Motor neuron (in vitro differentiated cells): ENCODE measurements at regions of chr7 and their contacts with region 1.

Region 1: DNA sequence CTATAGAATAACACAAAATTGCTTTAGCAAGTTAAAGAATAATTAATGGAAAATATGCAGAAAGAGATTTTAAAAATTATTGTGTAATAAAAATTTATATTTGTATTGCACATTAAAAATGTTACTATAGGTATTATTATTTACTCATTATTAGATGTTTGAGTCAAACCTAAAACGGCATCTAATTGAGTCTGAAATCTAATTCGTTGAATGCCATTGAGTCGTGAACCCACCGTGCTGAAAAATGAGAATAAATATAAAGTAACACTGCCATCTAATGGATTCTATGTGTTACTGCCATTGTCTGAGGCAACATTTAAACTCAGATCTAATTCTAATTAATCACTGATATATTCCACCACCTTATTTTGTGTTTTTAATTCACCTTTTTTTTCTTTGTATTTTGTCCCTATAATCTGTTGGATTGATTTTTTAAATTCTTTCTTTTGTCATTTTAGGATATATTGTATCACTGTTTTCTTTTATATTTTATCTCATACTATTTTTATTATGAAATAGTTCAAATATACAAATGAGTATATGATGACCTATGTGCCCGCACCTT is 62.2 kb downstream of the SAMD9 start:
- ATAC-seq: peak in 5 of 8 experiments; percentile 24 to 62 (median 39)
- H3K4me3 ChIP-seq: no peak overlapping the region
- H3K27ac ChIP-seq: no peak overlapping the region
- H3K4me1 ChIP-seq: no peaks in the 10 kb centered on the region

Region 2: GRCh38 chr7:92621026-92621540 is 434.5 kb before region 1 on chr7:
- in situ Hi-C with region 1: loop called (anchors 10 to 25 kb)
- ATAC-seq: peak; percentile 44 to 92 (median 75)
- H3K4me3 ChIP-seq: no peak overlapping the region
- H3K27ac ChIP-seq: no peak overlapping the region
- H3K4me1 ChIP-seq: peaks cover 2 to 3% of the 10 kb centered on the region in 2 donors

Region 3: DNA sequence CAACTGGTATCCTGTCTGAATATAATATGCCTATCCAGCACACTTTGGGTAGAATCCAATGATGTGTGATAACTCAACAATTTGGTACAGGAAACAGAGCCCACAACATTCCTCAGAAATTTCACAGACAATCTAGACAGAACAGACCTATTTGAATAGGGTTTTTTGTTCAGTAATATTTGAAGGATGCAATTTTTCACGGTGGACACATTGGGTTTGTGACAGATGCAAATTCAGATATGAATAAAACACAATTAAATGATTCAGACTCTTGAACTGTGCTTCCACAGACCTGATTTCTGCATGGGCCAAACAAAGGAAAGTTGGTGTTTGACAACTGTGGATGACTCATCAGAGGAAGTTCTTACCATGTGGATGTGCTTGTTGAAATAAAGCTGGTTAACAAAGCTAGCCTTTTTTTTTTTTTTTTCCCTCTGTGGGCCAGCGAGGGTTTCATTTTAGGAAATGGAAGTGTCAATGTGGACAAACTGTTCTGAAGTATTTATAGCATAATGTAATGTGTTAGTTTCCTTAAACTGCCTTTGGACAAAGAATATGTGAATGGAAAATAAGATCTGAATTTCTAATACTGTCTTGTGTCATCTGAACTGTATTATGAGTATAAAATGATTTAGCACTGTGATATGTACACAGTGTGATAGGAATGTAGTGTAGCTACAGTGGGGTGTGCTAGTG is 422.3 kb before region 1 on chr7:
- in situ Hi-C with region 1: loop called in 3 of 9 experiments (anchors 10 to 25 kb)
- ATAC-seq: peak; percentile 88 to 95 (median 90)
- H3K4me3 ChIP-seq: no peak overlapping the region
- H3K27ac ChIP-seq: peak overlapping the region in 1 of 2 donors; percentile 11
- H3K4me1 ChIP-seq: peaks cover 24 to 31% of the 10 kb centered on the region in 2 donors

Region 4: DNA sequence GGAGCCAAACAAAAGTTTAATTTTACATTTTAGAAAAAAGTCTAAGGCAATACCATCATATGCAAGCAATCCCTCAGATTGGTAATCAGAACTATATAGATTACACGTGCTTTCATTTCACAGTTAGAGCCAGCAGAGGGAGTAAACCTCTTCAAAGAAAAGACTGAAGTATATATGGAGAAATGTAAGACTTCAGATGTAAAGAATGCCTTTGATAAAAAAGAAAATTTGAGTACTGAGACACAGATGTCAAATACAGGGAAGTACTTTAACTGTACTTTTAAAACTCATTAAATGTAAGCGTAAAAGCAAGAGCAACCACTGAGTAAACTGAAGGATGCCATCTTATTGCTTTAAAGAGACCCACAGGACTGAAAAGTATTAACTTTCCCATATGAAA is 364.0 kb before region 1 on chr7:
- in situ Hi-C with region 1: loop called in 1 of 9 experiments (anchors 25 kb)
- ATAC-seq: peak in 5 of 8 experiments; percentile 23 to 44 (median 32)
- H3K4me3 ChIP-seq: no peak overlapping the region
- H3K27ac ChIP-seq: no peak overlapping the region
- H3K4me1 ChIP-seq: peaks cover under 1 to 9% of the 10 kb centered on the region in 2 donors

Region 5: GRCh38 chr7:92854501-92855238 is 201.0 kb before region 1 on chr7:
- in situ Hi-C with region 1: loop called in 1 of 9 experiments (anchors 25 kb)
- ATAC-seq: no peak
- H3K4me3 ChIP-seq: no peak overlapping the region
- H3K27ac ChIP-seq: no peak overlapping the region
- H3K4me1 ChIP-seq: peaks cover 0 to 2% of the 10 kb centered on the region in 2 donors

Region 6: DNA sequence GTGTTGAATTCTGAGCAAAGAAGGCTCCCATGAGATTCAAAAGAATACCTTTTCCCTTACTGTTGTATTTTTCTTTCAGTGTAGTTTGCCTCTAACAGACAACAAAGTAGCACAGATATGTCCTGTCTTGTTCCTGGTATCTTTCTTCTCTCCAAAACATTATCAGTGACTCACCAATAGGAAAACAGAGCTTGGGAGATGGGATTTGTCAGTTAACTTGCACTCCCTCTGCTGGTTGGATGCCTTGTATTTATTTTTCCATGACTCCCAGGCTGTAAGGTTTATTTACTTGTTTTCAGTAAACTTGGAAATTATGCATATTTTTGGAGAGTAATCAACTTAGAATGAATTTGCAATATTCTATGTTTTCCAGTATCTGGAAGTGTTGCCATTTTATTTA is 67.6 kb before region 1 on chr7:
- in situ Hi-C with region 1: no loop called
- ATAC-seq: peak in 3 of 8 experiments; percentile 41 to 73 (median 70)
- H3K4me3 ChIP-seq: no peak overlapping the region
- H3K27ac ChIP-seq: no peak overlapping the region
- H3K4me1 ChIP-seq: peaks cover 0 to 2% of the 10 kb centered on the region in 2 donors